Activated CD4-positive, alpha-beta T cell treated with anti-CD3 and anti-CD28 coated beads, Interleukin-2, amount 10 ng/mL, durations not matched to agents 24 days and 14 days (primary cell): ENCODE measurements at regions of chr6 and their contacts with region 1.

Region 1: GRCh38 chr6:99568103-99568933 is at the start of gene CCNC:
- DNase-seq: peak; percentile 96
- H3K4me3 Mint-ChIP-seq: peak within 1 kb of the TSS; percentile 99
- H3K27ac Mint-ChIP-seq: peak within 1 kb of the TSS; percentile 93
- H3K4me1 Mint-ChIP-seq: peaks cover 20% of the 10 kb centered on the region
- H3K27me3 Mint-ChIP-seq: no peaks in the 10 kb centered on the region
- total RNA-seq, gene CCNC: 49.6 and 56.0 TPM in 2 replicates

Region 2: GRCh38 chr6:98947351-98948292 is 620.7 kb before region 1 on chr6 and contains the start of gene FBXL4:
- intact Hi-C with region 1: loop called (anchors 5 kb)
- DNase-seq: peak; percentile 94
- H3K4me3 Mint-ChIP-seq: peak within 1 kb of the TSS; percentile 97
- H3K27ac Mint-ChIP-seq: peak within 1 kb of the TSS; percentile 98
- H3K4me1 Mint-ChIP-seq: peaks cover 32% of the 10 kb centered on the region
- H3K27me3 Mint-ChIP-seq: peaks cover 27% of the 10 kb centered on the region
- total RNA-seq, gene FBXL4: 12.8 and 15.3 TPM in 2 replicates

Region 3: DNA sequence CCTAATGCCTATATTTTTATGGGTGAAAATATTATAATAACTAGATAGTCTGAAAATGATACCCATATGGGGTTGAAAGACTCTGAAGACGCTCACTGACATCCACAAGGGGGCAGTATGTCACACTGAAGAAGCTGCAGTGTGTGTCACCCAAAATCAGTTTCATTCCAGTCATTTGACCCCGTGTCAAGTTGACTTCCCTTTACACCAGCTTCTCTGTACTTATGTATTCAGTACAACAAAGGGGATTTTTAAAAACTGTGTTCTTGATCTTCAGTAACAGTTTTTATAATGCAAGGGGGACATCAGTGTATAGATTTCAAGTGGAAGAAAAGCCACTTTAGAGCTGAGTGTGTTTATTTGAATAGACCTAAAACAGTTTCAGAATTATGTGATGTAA is 238.2 kb before region 1 on chr6:
- intact Hi-C with region 1: loop called (anchors 10 kb)
- DNase-seq: peak; percentile 87
- H3K4me3 Mint-ChIP-seq: no peak overlapping the region
- H3K27ac Mint-ChIP-seq: no peak overlapping the region
- H3K4me1 Mint-ChIP-seq: peaks cover 2% of the 10 kb centered on the region
- H3K27me3 Mint-ChIP-seq: peaks cover 10% of the 10 kb centered on the region

Region 4: GRCh38 chr6:99425647-99426453 is 142.5 kb before region 1 on chr6:
- intact Hi-C with region 1: loop called (anchors 1 kb)
- DNase-seq: peak; percentile 88
- H3K4me3 Mint-ChIP-seq: peak overlapping the region; percentile 89
- H3K27ac Mint-ChIP-seq: peak overlapping the region; percentile 98
- H3K4me1 Mint-ChIP-seq: peaks cover 45% of the 10 kb centered on the region
- H3K27me3 Mint-ChIP-seq: no peaks in the 10 kb centered on the region

Region 5: GRCh38 chr6:99514089-99514488 is 54.2 kb before region 1 on chr6:
- intact Hi-C with region 1: loop called (anchors 1 kb)
- DNase-seq: no peak
- H3K4me3 Mint-ChIP-seq: peak overlapping the region; percentile 95
- H3K27ac Mint-ChIP-seq: peak overlapping the region; percentile 28
- H3K4me1 Mint-ChIP-seq: peaks cover 31% of the 10 kb centered on the region
- H3K27me3 Mint-ChIP-seq: peaks cover 9% of the 10 kb centered on the region

Region 6: DNA sequence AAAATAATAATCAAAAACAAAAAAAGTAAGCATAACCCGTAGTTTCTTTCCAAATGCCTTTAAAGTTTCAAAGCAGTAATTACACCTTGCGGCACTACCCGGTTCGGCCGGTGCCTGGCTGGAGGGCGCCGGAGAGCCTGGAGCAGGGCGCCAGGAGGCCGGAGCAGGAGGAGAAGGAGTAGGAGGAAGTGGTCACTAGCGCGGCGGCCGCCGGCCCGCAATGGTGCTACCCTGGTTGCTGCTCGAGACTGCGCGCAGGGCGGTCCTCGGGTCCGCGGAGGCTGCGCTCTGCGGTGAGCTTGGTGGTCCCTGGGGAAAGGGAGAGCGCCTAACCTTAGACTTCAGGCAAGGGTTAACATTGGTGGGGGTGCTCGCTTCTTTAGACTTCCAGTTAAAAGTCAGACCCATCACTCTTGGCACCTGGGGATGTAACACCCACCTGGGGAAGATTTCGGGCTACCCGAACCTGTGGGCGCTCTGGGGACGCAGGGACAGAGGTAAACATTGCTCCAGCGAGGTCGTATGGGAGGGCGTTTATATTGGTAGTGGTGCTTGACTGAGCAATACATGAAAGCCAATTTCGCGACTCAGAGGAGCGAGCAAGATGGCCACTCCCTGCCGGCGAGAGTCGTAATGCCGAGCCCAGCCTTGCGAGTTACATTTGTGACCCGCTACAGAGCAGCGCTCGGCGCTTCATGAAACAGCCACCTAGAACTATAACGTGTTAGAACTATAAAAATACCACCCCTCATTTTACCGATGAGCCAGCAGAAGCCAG is 47.3 kb before region 1 on chr6:
- intact Hi-C with region 1: loop called (anchors 1 kb)
- DNase-seq: peak; percentile 93
- H3K4me3 Mint-ChIP-seq: peak overlapping the region; percentile 99
- H3K27ac Mint-ChIP-seq: peak overlapping the region; percentile 99
- H3K4me1 Mint-ChIP-seq: peaks cover 18% of the 10 kb centered on the region
- H3K27me3 Mint-ChIP-seq: peaks cover 11% of the 10 kb centered on the region

Region 7: GRCh38 chr6:99588618-99589289 is 20.4 kb after region 1 on chr6:
- intact Hi-C with region 1: loop called (anchors 2 kb)
- DNase-seq: peak; percentile 89
- H3K4me3 Mint-ChIP-seq: peak overlapping the region; percentile 88
- H3K27ac Mint-ChIP-seq: peak overlapping the region; percentile 45
- H3K4me1 Mint-ChIP-seq: peaks cover 25% of the 10 kb centered on the region
- H3K27me3 Mint-ChIP-seq: peaks cover 77% of the 10 kb centered on the region

Region 8: GRCh38 chr6:99629293-99629692 is 61.0 kb after region 1 on chr6:
- intact Hi-C with region 1: no loop called
- DNase-seq: no peak
- H3K4me3 Mint-ChIP-seq: no peak overlapping the region
- H3K27ac Mint-ChIP-seq: no peak overlapping the region
- H3K4me1 Mint-ChIP-seq: no peaks in the 10 kb centered on the region
- H3K27me3 Mint-ChIP-seq: peaks cover 27% of the 10 kb centered on the region

Region 9: DNA sequence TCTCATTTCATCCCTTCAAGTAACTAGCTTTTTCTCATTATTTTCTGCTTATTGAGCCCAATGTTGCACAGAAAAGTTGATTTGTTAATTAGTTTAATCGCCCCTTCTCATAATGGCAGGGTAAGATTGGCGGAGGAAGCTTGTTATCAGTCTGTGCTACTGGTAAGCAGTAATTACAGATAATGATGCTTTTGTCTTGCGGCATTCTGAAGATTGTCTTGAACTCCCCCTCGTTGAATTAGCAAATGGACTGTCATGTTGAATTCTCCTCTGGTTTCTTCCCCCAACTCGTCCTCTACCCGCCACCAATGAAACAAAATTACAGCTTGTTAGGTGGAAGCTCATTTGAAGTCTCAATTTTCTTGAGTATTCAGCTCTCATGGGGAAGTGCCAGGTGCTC is 77.7 kb after region 1 on chr6:
- intact Hi-C with region 1: no loop called
- DNase-seq: no peak
- H3K4me3 Mint-ChIP-seq: no peak overlapping the region
- H3K27ac Mint-ChIP-seq: no peak overlapping the region
- H3K4me1 Mint-ChIP-seq: no peaks in the 10 kb centered on the region
- H3K27me3 Mint-ChIP-seq: peaks cover 11% of the 10 kb centered on the region